Tibial artery (tissue), 4 donors: ENCODE measurements at regions of chr11 and their contacts with region 1.

Region 1: DNA sequence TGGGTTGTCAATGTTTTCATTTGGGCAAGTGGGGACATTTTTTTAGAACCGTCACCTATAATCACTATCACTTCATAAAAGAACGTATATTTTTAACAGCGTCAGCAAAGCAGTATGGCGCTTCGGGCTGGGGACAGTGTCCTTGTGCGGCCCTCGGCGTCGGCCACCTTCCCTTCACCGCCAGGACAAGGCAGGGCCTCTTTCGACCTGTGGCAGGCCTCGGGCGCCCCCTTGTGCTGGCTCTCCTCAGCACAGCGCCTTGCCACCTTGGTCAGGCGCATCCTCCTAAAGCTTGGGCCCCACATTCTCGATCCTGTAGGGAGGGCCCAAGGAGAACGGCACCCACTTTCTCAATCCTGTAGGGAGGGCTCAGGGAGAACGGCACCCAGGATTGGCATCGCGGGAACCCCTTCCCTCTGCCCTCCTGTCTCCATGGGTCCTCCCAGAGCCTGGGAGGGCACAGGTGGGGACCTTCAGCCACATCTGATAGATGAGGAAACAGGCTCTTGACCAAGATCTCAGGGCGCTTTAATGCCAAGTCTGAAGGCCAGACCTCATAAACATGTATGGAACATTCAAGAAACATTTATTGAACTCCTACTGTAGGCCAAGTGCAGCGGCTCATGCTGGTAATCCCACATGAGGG is 11.5 kb upstream of the FADD start:
- DNase-seq: peak; percentile 62 to 88
- H3K4me3 ChIP-seq: no peak overlapping the region
- H3K27ac ChIP-seq: no peak overlapping the region
- H3K4me1 ChIP-seq: peaks cover 0 to 16% (median 4%) of the 10 kb centered on the region in 4 donors
- H3K27me3 ChIP-seq: no peaks in the 10 kb centered on the region
- CTCF ChIP-seq: peak; percentile 95 to 97

Region 2: GRCh38 chr11:69686452-69686851 is 505.2 kb before region 1 on chr11:
- intact Hi-C with region 1: loop called (anchors 2 kb)
- DNase-seq: peak in 1 of 2 donors; percentile 63
- H3K4me3 ChIP-seq: no peak overlapping the region
- H3K27ac ChIP-seq: no peak overlapping the region
- H3K4me1 ChIP-seq: peaks cover 0 to 8% (median 2%) of the 10 kb centered on the region in 4 donors
- H3K27me3 ChIP-seq: peaks cover 0 to 22% of the 10 kb centered on the region in 2 donors
- CTCF ChIP-seq: no peak

Region 3: GRCh38 chr11:69718147-69718546 is 473.5 kb before region 1 on chr11:
- intact Hi-C with region 1: loop called (anchors 10 kb)
- DNase-seq: no peak
- H3K4me3 ChIP-seq: no peak overlapping the region
- H3K27ac ChIP-seq: no peak overlapping the region
- H3K4me1 ChIP-seq: no peaks in the 10 kb centered on the region
- H3K27me3 ChIP-seq: peaks cover 0 to 75% of the 10 kb centered on the region in 2 donors
- CTCF ChIP-seq: no peak

Region 4: DNA sequence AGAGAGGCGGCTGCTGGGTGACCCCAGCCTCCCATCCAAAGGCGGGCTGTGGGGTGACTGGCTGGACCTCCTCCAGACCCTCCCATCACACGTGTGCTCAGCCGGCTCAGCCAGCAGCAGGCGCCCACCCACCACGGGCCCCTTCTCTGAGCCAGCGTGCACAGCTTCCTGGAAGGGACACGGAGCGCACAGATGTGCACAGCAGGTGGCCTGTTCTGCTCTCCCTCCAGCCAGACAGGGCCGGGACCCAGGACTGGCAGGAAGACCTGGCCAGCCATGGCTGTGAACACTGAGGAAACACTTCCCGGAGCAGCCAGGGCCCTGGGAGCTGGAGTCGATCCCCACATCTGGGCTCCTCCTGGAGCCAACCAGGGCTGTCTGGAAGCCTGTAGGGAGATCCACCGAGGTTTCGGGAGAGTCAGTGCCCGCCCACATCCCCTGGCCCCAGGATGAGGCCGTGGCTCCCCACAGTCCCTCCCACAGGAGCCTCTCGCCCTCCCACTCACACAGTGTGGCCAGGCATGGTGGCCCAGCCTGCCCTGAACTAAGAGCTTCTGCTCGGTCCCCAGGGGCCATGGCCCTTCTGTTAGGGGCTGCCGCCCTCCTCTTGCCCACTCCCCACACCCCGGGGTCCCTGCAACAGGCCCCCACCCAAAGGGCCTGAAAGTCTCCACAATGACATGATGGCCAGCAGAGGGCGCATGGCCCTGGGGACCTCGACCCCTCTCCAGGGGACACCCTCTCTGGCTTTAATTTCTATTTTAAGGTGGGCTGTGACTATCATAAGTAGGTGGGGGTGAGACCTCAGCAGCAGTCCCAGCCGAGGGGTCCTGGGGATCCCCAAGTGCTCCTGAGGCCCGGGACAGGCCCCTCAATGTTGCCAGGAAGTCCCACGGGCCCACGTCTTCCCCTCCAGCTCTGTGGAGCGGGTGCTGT is 281.8 kb before region 1 on chr11:
- intact Hi-C with region 1: loop called (anchors 2 kb)
- DNase-seq: no peak
- H3K4me3 ChIP-seq: no peak overlapping the region
- H3K27ac ChIP-seq: no peak overlapping the region
- H3K4me1 ChIP-seq: peaks cover 0 to 46% (median 21%) of the 10 kb centered on the region in 4 donors
- H3K27me3 ChIP-seq: peaks cover 0 to 18% of the 10 kb centered on the region in 2 donors
- CTCF ChIP-seq: peak; percentile 44 to 60